Heart left ventricle (tissue), 16 donors: ENCODE measurements at regions of chr1 and their contacts with region 1.

Region 1: DNA sequence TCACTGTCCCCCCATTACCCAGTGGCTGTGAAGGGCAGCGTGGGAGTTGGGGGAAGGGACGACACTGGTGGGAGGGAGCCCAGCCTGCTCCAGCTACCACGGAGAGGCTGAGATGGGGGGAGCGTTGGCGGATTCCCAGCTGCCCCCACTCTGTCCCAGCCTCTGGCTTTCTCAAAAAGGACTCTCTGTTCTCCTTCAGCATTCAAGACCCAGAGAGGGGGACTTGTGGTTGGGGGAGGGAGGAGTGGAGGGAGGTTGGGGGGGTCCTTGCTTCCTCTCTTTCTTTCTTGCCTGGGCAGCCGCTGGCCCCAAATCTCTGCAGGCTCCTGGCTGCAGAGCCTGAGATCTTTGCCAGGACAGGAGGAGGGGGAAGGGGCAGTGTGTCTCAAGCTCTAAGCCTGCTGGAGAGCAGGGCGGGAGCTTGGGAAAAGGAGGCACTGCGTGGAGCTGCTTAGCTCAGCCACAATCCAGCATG is 2.2 kb downstream of the ATP1A2 start:
- DNase-seq: peak in 4 of 5 donors; percentile 41 to 76 (median 67)
- ATAC-seq: peak; percentile 43 to 74 (median 53)
- H3K4me3 ChIP-seq: peak overlapping the region; percentile 37 to 86 (median 62)
- H3K27ac ChIP-seq: peak overlapping the region in 10 of 12 donors; percentile 60 to 96 (median 87)
- H3K4me1 ChIP-seq: peaks cover 0 to 68% (median 38%) of the 10 kb centered on the region in 12 donors
- H3K27me3 ChIP-seq: no peaks in the 10 kb centered on the region
- CTCF ChIP-seq: no peak
- POLR2A ChIP-seq: no peak

Region 2: GRCh38 chr1:160018900-160019299 is 98.8 kb before region 1 on chr1:
- intact Hi-C with region 1: no loop called
- DNase-seq: no peak
- ATAC-seq: no peak
- H3K4me3 ChIP-seq: no peak overlapping the region
- H3K27ac ChIP-seq: no peak overlapping the region
- H3K4me1 ChIP-seq: peaks cover 0 to 9% (median 4%) of the 10 kb centered on the region in 12 donors
- H3K27me3 ChIP-seq: peaks cover 0 to 2% (median 0%) of the 10 kb centered on the region in 9 donors
- CTCF ChIP-seq: no peak
- POLR2A ChIP-seq: no peak

Region 3: GRCh38 chr1:160070243-160071163 is 47.2 kb before region 1 on chr1:
- intact Hi-C with region 1: no loop called
- DNase-seq: peak; percentile 77 to 90 (median 86)
- ATAC-seq: peak; percentile 88 to 97 (median 94)
- H3K4me3 ChIP-seq: peak overlapping the region; percentile 29 to 71 (median 59)
- H3K27ac ChIP-seq: peak overlapping the region in 2 of 12 donors; percentile 40 to 42
- H3K4me1 ChIP-seq: peaks cover 0 to 17% (median 6%) of the 10 kb centered on the region in 12 donors
- H3K27me3 ChIP-seq: peaks cover 0 to 11% (median 0%) of the 10 kb centered on the region in 9 donors
- CTCF ChIP-seq: no peak
- POLR2A ChIP-seq: no peak

Region 4: DNA sequence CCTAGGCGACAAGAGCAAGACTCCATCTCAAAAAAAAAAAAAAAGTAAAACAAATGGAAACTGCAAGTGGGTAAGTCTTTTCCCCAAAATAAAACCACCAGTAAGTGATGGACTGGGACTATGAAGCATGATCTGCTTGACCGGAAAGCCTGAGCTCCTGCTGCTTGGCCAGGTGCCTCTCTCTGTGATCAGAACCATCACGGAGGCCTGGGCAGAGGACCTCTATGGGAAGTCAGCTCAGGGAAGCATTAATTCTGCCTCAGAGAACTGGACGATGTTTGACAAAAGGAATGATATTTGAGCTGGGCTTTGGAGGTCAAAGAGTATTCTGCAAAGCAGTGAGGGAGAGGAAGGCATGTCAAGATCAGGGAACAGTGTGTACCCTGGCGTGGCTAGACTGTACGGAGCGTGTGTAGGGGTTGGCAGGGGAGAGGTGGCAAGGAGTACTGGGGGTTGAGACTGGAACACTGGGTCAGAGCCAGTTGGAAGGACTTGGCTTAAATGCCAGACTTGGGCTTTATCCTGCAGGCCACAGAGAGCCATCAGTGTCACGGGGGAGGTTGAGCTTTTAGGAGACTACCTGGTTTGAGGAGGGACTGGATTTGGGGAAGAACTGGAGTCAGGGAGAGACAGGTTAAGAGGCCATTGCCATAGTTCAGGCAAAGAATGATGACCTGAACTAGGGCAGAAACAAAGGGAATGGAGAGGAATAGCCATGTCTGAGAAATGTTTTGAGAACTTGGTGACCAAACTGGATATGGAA is 14.2 kb after region 1 on chr1:
- intact Hi-C with region 1: loop called in 1 of 10 experiments (anchors 2 kb)
- DNase-seq: peak in 4 of 5 donors; percentile 65 to 91 (median 78)
- ATAC-seq: peak; percentile 86 to 92 (median 89)
- H3K4me3 ChIP-seq: no peak overlapping the region
- H3K27ac ChIP-seq: peak overlapping the region in 11 of 12 donors; percentile 68 to 95 (median 82)
- H3K4me1 ChIP-seq: peaks cover 0 to 58% (median 25%) of the 10 kb centered on the region in 12 donors
- H3K27me3 ChIP-seq: no peaks in the 10 kb centered on the region
- CTCF ChIP-seq: no peak
- POLR2A ChIP-seq: peak in 1 of 2 donors; percentile 30

Region 5: GRCh38 chr1:160149716-160150115 is 32.0 kb after region 1 on chr1:
- intact Hi-C with region 1: no loop called
- DNase-seq: no peak
- ATAC-seq: no peak
- H3K4me3 ChIP-seq: no peak overlapping the region
- H3K27ac ChIP-seq: peak overlapping the region in 1 of 12 donors; percentile 19
- H3K4me1 ChIP-seq: peaks cover 0 to 7% (median 0%) of the 10 kb centered on the region in 12 donors
- H3K27me3 ChIP-seq: no peaks in the 10 kb centered on the region
- CTCF ChIP-seq: no peak
- POLR2A ChIP-seq: no peak

Region 6: GRCh38 chr1:160169553-160170399 is 52.0 kb after region 1 on chr1:
- intact Hi-C with region 1: loop called in 1 of 10 experiments (anchors 10 kb)
- DNase-seq: no peak
- ATAC-seq: no peak
- H3K4me3 ChIP-seq: no peak overlapping the region
- H3K27ac ChIP-seq: no peak overlapping the region
- H3K4me1 ChIP-seq: no peaks in the 10 kb centered on the region
- H3K27me3 ChIP-seq: peaks cover 0 to 4% (median 0%) of the 10 kb centered on the region in 9 donors
- CTCF ChIP-seq: no peak
- POLR2A ChIP-seq: no peak